B cell (primary cell): ENCODE measurements at regions of chr11 and their contacts with region 1.

Region 1: GRCh38 chr11:94504689-94505293 is 7.5 kb upstream of the C11orf97 start:
- DNase-seq: peak; percentile 64
- ATAC-seq: peak; percentile 33
- H3K4me3 ChIP-seq: no peak overlapping the region
- H3K4me3 Mint-ChIP-seq: no peak overlapping the region
- H3K27ac ChIP-seq: no peak overlapping the region
- H3K27ac Mint-ChIP-seq: no peak overlapping the region
- H3K4me1 ChIP-seq: no peaks in the 10 kb centered on the region
- H3K4me1 Mint-ChIP-seq: no peaks in the 10 kb centered on the region
- H3K27me3 ChIP-seq: no peaks in the 10 kb centered on the region
- H3K27me3 Mint-ChIP-seq: peaks cover 3% of the 10 kb centered on the region
- CTCF ChIP-seq: peak; percentile 88

Region 2: GRCh38 chr11:92941676-92942571 is 1562.9 kb before region 1 on chr11:
- CTCF ChIA-PET with region 1: no interaction called
- POLR2A ChIA-PET with region 1: no interaction called
- intact Hi-C with region 1: loop called (anchors 10 kb)
- DNase-seq: peak; percentile 29
- ATAC-seq: no peak
- H3K4me3 ChIP-seq: no peak overlapping the region
- H3K4me3 Mint-ChIP-seq: no peak overlapping the region
- H3K27ac ChIP-seq: no peak overlapping the region
- H3K27ac Mint-ChIP-seq: no peak overlapping the region
- H3K4me1 ChIP-seq: no peaks in the 10 kb centered on the region
- H3K4me1 Mint-ChIP-seq: no peaks in the 10 kb centered on the region
- H3K27me3 ChIP-seq: no peaks in the 10 kb centered on the region
- H3K27me3 Mint-ChIP-seq: peaks cover 3% of the 10 kb centered on the region
- CTCF ChIP-seq: peak; percentile 62

Region 3: DNA sequence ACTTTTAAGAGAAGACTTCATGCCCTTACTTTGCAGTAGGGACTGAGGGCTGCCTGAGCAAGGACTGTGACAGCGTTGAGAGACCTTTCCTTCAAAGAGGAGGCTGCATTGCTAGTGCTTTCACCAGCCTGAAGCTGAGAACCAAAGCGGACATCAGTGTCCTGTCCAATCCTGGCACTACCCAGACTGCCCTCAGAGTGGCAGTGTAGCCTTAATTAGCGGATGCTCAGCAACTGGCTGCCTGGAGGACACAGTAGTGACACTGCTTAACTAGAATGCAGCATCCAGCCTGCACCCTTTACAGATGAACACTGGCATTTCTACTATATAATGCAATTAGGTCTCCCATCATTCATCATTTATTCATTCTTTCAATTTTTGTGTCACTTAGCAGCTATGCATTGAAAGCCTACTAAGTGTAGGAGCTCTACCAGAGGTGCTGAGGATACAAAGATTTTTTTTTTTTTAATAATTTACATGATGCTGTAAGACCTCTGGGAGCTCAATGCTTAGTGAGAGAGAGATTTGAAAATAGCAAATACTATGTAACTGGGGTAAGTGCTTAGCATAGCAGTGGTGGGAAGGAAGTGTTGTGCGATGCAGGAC is 1270.1 kb before region 1 on chr11:
- CTCF ChIA-PET with region 1: interaction called, 5 read pairs
- POLR2A ChIA-PET with region 1: no interaction called
- intact Hi-C with region 1: loop called (anchors 1 kb)
- DNase-seq: peak; percentile 69
- ATAC-seq: peak; percentile 92
- H3K4me3 ChIP-seq: no peak overlapping the region
- H3K4me3 Mint-ChIP-seq: no peak overlapping the region
- H3K27ac ChIP-seq: no peak overlapping the region
- H3K27ac Mint-ChIP-seq: no peak overlapping the region
- H3K4me1 ChIP-seq: no peaks in the 10 kb centered on the region
- H3K4me1 Mint-ChIP-seq: no peaks in the 10 kb centered on the region
- H3K27me3 ChIP-seq: peaks cover 0 to 5% (median 2%) of the 10 kb centered on the region in 4 experiments
- H3K27me3 Mint-ChIP-seq: peaks cover 27% of the 10 kb centered on the region
- CTCF ChIP-seq: peak; percentile 87

Region 4: DNA sequence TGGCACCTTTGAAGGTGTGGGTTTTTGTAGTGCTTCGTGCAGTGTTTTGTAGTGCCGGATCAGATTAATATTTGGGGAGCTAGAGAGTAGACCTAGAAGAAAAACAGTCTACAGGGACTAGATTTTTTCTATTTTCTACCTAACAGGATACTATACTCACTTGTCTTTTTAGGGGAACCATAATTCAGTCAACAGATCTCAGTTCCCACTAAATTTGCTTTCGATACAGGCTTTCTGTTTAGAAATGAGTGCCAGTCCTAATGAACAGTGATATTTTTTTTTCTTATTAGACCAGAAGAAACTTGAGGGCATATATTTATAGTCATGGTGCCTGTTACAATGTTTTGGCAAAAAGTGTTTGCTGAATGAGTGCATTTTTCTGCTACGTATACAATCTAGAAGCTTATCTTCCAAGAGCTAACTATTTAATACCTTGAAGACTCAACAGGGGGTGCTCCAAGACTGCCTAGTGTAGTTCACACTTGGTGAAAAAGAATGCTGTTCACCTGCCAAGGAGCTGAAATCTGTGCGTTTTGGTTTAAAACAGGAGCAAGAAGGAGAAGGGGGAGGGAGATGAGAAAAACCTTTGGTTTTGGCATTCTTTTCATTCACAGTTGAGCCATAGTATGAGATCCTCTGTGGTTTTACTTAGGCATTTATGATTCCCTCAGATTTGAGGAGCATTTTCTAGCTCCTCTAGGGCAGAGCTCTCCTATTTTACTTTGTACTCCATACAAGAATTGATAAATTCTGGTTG is 609.5 kb before region 1 on chr11:
- CTCF ChIA-PET with region 1: interaction called, 21 read pairs
- POLR2A ChIA-PET with region 1: no interaction called
- intact Hi-C with region 1: no loop called
- DNase-seq: peak; percentile 44
- ATAC-seq: no peak
- H3K4me3 ChIP-seq: no peak overlapping the region
- H3K4me3 Mint-ChIP-seq: no peak overlapping the region
- H3K27ac ChIP-seq: no peak overlapping the region
- H3K27ac Mint-ChIP-seq: no peak overlapping the region
- H3K4me1 ChIP-seq: no peaks in the 10 kb centered on the region
- H3K4me1 Mint-ChIP-seq: no peaks in the 10 kb centered on the region
- H3K27me3 ChIP-seq: peaks cover 0 to 7% (median 5%) of the 10 kb centered on the region in 4 experiments
- H3K27me3 Mint-ChIP-seq: peaks cover 37% of the 10 kb centered on the region
- CTCF ChIP-seq: peak; percentile 57

Region 5: GRCh38 chr11:94183886-94184264 is 320.9 kb before region 1 on chr11:
- CTCF ChIA-PET with region 1: interaction called, 8 read pairs
- POLR2A ChIA-PET with region 1: no interaction called
- intact Hi-C with region 1: loop called (anchors 2 kb)
- DNase-seq: peak; percentile 45
- ATAC-seq: no peak
- H3K4me3 ChIP-seq: no peak overlapping the region
- H3K4me3 Mint-ChIP-seq: peak overlapping the region; percentile 18
- H3K27ac ChIP-seq: no peak overlapping the region
- H3K27ac Mint-ChIP-seq: no peak overlapping the region
- H3K4me1 ChIP-seq: peaks cover 14 to 16% of the 10 kb centered on the region in 2 donors
- H3K4me1 Mint-ChIP-seq: peaks cover 21% of the 10 kb centered on the region
- H3K27me3 ChIP-seq: no peaks in the 10 kb centered on the region
- H3K27me3 Mint-ChIP-seq: no peaks in the 10 kb centered on the region
- CTCF ChIP-seq: peak; percentile 78

Region 6: DNA sequence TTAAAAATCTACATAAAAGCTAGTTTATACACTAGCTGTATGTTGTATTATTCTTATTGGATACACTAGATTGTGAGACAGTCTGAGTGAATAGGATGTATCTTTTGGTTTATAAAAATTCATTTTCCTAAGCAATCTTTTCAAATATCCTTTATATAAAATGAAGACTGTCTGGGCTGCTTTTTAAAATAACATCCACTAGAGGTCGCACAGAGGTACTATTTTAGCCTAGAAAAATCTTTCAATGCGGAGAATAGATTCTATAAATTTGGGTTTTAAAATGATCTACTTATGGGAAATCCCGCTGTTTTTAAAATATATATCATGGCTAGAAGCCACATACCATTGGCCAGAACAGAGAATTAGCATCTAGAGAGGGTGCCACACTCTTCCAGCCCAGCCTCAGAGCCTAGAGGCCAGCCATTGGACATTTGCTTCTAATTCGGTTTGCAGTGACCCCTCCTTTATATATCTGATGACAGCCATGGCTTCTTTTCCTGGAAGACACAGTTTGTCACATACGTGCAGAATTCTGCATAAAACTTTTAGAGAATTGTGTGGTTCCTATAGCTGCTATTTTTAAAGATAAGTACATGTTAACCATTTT is 14.8 kb after region 1 on chr11:
- CTCF ChIA-PET with region 1: interaction called, 13 read pairs
- POLR2A ChIA-PET with region 1: no interaction called
- intact Hi-C with region 1: no loop called
- DNase-seq: peak; percentile 48
- ATAC-seq: no peak
- H3K4me3 ChIP-seq: no peak overlapping the region
- H3K4me3 Mint-ChIP-seq: no peak overlapping the region
- H3K27ac ChIP-seq: no peak overlapping the region
- H3K27ac Mint-ChIP-seq: no peak overlapping the region
- H3K4me1 ChIP-seq: no peaks in the 10 kb centered on the region
- H3K4me1 Mint-ChIP-seq: no peaks in the 10 kb centered on the region
- H3K27me3 ChIP-seq: peaks cover 0 to 4% (median 2%) of the 10 kb centered on the region in 4 experiments
- H3K27me3 Mint-ChIP-seq: peaks cover 27% of the 10 kb centered on the region
- CTCF ChIP-seq: peak; percentile 83